ENCODE measurements at regions of chr2 and their contacts with region 1.

Region 1: DNA sequence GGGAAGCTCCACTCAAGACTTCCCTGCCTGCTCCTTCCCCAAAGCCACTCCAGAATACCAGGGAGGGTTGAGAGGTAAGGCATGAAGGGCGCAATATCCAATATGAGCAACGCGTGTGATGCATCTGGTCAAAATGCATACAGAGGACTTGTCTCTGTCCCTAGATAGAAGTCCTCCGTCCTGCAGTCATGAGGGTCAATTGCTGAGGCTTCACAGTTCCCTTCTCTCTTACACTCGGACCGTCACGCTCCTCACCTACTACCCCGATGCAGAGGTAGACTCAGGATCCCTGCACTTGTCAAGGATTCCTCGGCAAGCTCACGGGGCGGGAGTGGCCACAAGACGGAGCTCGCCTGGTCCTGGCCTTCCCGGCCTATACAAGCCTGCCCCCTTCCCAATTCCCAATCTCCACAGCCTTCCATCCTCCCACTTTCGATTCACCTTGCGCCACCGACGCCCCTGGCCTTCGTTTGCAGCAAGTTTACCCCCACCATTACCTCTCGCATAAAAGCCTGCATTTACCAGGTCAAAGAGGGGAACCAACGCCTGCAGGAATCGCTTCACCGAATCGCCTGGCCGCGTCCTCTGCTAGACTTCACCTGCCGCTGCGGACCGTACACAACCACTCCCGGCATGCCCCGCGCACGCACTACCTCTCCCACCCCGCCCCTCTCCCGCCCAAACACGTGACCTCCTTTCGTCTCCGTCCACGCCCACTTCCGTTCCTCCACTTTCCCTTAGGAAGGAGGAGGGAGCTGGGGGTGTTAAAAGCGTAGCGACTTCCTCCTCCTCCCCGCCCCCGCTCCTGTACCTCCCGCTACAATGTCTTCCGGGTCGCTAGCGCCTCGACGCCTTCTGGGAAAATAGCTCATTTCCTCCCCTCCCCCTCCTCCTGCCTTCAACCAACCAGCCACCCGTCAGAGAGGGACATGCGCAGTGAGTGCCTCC is at the start of gene ORC4:
- DNase-seq: peak; percentile 96
- ATAC-seq: peak; percentile 92
- H3K4me3 Mint-ChIP-seq: peak within 1 kb of the TSS; percentile 100
- H3K27ac Mint-ChIP-seq: peak within 1 kb of the TSS; percentile 100
- H3K4me1 Mint-ChIP-seq: peaks cover 44% of the 10 kb centered on the region
- H3K27me3 Mint-ChIP-seq: no peaks in the 10 kb centered on the region
- CTCF ChIP-seq: no peak
- total RNA-seq, gene ORC4: 56.4 to 60.9 TPM (median 57.9 TPM) in 3 replicates

Region 2: DNA sequence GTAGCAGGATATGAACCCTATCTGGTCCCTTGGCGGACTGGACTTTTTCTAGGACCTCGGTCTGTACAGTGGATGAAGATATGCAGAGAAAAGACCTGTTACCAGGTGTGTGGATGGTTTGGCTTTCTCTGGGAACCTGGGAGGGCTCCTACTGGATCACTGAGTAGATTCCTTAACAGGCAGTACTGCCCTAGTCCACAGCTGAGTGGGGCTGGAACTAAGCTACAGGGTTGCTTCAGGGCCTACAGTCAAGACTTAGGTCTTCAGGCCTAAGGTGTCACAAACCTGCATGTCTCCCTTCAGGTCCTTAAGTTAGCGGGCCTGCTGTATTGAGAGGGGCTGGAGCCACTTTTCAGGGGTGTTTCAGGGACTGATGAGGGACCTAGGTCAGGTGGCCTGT is 42.7 kb before region 1 on chr2:
- CTCF ChIA-PET with region 1: no interaction called
- POLR2A ChIA-PET with region 1: no interaction called
- DNase-seq: no peak
- ATAC-seq: peak; percentile 44
- H3K4me3 Mint-ChIP-seq: no peak overlapping the region
- H3K27ac Mint-ChIP-seq: no peak overlapping the region
- H3K4me1 Mint-ChIP-seq: peaks cover 5% of the 10 kb centered on the region
- H3K27me3 Mint-ChIP-seq: no peaks in the 10 kb centered on the region
- CTCF ChIP-seq: no peak

Region 3: DNA sequence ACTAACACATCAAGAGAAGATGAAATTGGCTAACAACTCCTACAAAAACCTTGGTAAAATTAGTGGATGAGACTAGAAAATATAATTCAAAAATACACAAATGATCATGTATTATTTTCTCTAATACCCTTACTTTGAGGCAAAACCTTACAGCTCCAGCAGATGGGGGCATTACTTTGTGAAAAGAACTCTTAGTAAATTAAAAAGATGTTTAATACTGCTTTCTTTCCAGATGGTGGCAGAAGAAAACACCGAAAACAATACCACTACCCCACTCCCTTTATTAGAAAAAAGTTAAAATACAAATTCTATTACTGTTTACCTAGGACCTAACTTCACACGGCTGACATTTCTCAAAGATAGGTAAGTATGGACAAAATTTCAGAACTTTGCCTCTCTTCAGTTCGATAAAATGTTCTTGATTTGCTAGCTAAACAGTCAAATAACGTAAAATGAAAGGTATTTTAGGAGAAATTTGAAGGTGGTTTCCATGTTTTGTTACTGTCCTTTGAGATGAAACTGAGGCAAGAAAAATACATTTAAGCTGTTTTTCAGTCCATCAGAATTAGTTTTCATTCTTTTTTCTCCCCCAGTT is 30.5 kb before region 1 on chr2:
- CTCF ChIA-PET with region 1: interaction called, 18 read pairs
- POLR2A ChIA-PET with region 1: no interaction called
- DNase-seq: no peak
- ATAC-seq: peak; percentile 77
- H3K4me3 Mint-ChIP-seq: no peak overlapping the region
- H3K27ac Mint-ChIP-seq: peak overlapping the region; percentile 85
- H3K4me1 Mint-ChIP-seq: peaks cover 26% of the 10 kb centered on the region
- H3K27me3 Mint-ChIP-seq: no peaks in the 10 kb centered on the region
- CTCF ChIP-seq: no peak

Region 4: GRCh38 chr2:148096012-148096411 is 75.6 kb after region 1 on chr2:
- CTCF ChIA-PET with region 1: no interaction called
- POLR2A ChIA-PET with region 1: no interaction called
- DNase-seq: no peak
- ATAC-seq: no peak
- H3K4me3 Mint-ChIP-seq: no peak overlapping the region
- H3K27ac Mint-ChIP-seq: no peak overlapping the region
- H3K4me1 Mint-ChIP-seq: no peaks in the 10 kb centered on the region
- H3K27me3 Mint-ChIP-seq: no peaks in the 10 kb centered on the region; the same call in 1 of the 2 replicates
- CTCF ChIP-seq: no peak

Region 5: DNA sequence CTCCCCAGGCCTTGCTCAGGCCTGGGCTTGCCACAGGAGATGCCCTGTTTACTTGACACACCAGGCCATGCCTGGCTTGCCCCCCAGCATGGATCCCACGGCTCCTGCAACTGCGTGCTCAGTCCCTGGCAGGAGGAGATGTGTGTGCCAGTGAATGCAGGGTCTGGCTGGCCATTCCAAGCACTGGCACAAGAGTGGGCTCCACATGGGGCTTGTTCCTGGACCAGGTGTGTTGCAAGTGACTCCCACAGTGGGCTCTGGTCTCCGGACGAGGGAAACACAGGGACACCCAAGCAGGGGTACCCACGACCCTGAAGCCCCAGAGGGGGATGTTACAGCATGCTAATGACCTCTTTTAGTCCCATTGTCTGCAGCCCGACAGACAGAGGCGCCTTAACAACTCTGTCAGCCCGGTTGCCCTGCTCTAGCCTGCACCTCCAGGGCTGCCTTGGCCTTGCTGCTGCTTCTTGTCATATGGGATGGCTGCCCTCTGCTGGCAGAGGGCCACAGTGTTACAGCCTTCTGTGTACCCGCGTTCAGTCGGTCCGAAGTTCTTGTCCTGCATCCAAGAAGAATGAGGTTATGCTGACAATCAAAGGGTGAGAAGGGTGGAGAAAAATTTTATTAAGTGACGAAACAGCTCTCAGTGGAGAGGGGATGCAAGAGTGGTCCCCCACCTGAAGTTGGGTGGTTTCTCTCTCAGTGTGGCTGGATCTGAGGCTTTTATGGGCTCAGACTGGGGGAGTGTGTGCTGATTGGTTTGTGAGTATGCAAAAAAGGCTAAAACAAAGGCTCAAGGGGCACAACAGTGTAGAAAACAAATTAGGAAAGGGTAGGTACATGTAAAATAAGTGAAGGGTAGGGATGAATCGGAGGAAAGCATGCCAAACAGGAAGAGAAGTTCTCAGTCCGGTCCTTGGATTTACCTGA is 181.0 kb after region 1 on chr2:
- CTCF ChIA-PET with region 1: interaction called, 11 read pairs
- POLR2A ChIA-PET with region 1: no interaction called
- DNase-seq: peak; percentile 87
- ATAC-seq: peak; percentile 99
- H3K4me3 Mint-ChIP-seq: no peak overlapping the region
- H3K27ac Mint-ChIP-seq: no peak overlapping the region
- H3K4me1 Mint-ChIP-seq: peaks cover 10% of the 10 kb centered on the region
- H3K27me3 Mint-ChIP-seq: no peaks in the 10 kb centered on the region; the same call in 1 of the 2 replicates
- CTCF ChIP-seq: peak; percentile 60

Region 6: DNA sequence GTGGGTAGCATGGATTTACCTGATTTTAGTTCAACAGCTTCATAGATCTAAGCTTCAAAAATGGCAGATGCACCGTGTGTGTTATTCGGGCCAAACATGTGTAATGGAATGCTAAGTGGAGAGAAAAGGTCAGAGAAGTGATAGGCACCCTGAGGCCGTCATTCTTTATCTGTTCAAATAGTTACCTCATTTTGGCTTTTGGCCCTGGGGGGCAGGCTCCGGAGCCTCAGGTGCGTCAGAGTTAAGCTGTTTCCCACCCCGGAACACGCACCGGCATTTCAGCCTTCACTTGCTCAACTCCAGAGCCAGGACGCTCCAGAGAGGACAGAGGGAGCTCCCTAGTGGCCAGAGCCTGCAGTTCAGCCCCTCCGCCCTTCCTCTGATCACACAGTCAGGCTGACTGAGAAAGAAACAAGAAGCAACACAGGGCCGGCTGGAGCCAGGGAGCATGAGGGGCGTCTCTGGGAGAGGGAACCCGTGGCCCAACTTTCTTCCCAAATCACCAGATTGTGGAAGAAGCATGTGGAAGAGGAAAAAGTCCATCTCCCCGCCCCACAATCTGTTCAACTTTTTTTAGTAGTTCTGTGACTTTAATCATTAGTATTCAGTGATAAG is 489.0 kb after region 1 on chr2:
- CTCF ChIA-PET with region 1: interaction called, 15 read pairs
- POLR2A ChIA-PET with region 1: interaction called, 3 read pairs
- DNase-seq: peak; percentile 94
- ATAC-seq: peak; percentile 100
- H3K4me3 Mint-ChIP-seq: peak overlapping the region; percentile 15; the same call in 1 of the 2 replicates
- H3K27ac Mint-ChIP-seq: no peak overlapping the region
- H3K4me1 Mint-ChIP-seq: peaks cover 13% of the 10 kb centered on the region
- H3K27me3 Mint-ChIP-seq: no peaks in the 10 kb centered on the region
- CTCF ChIP-seq: peak; percentile 65

Measured in WTC11 (cell line).